PC-9 (cell line): ENCODE measurements at regions of chr1 and their contacts with region 1.

Region 1: GRCh38 chr1:50658459-50659076 is 235.3 kb upstream of the DMRTA2 start:
- DNase-seq: no peak
- H3K4me3 ChIP-seq: no peak overlapping the region
- H3K27ac ChIP-seq: no peak overlapping the region
- H3K4me1 ChIP-seq: no peaks in the 10 kb centered on the region
- H3K27me3 ChIP-seq: no peaks in the 10 kb centered on the region
- CTCF ChIP-seq: no peak

Region 2: GRCh38 chr1:48955774-48956173 is 1702.8 kb before region 1 on chr1:
- CTCF ChIA-PET with region 1: interaction called, 12 read pairs
- POLR2A ChIA-PET with region 1: no interaction called
- intact Hi-C with region 1: no loop called
- DNase-seq: no peak
- H3K4me3 ChIP-seq: no peak overlapping the region
- H3K27ac ChIP-seq: no peak overlapping the region
- H3K4me1 ChIP-seq: no peaks in the 10 kb centered on the region
- H3K27me3 ChIP-seq: no peaks in the 10 kb centered on the region; the same call in 1 of the 2 replicates
- CTCF ChIP-seq: no peak

Region 3: DNA sequence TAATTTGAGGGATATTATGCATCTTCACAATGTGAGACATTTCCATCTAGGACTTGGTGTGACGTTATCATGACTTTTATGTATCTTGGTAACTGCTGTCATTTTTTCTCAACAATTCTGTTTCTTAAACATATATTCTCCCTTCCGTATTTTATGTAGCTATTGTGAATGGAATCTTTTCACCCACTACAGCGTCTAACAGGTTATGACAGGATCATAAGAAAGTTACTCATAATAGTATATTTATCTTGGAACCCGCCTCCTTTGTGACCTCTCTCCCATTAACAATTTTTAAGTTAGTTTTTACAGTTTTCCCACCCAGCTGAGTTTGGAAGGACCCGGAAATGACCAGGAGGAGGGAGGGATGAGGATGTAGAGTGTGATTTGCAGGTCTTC is 228.6 kb before region 1 on chr1:
- CTCF ChIA-PET with region 1: no interaction called
- POLR2A ChIA-PET with region 1: no interaction called
- intact Hi-C with region 1: no loop called
- DNase-seq: no peak
- H3K4me3 ChIP-seq: no peak overlapping the region
- H3K27ac ChIP-seq: no peak overlapping the region
- H3K4me1 ChIP-seq: no peaks in the 10 kb centered on the region
- H3K27me3 ChIP-seq: no peaks in the 10 kb centered on the region
- CTCF ChIP-seq: no peak

Region 4: GRCh38 chr1:50610563-50610962 is 48.0 kb before region 1 on chr1:
- CTCF ChIA-PET with region 1: no interaction called
- POLR2A ChIA-PET with region 1: no interaction called
- intact Hi-C with region 1: no loop called
- DNase-seq: no peak
- H3K4me3 ChIP-seq: no peak overlapping the region
- H3K27ac ChIP-seq: no peak overlapping the region
- H3K4me1 ChIP-seq: no peaks in the 10 kb centered on the region
- H3K27me3 ChIP-seq: no peaks in the 10 kb centered on the region
- CTCF ChIP-seq: no peak

Region 5: DNA sequence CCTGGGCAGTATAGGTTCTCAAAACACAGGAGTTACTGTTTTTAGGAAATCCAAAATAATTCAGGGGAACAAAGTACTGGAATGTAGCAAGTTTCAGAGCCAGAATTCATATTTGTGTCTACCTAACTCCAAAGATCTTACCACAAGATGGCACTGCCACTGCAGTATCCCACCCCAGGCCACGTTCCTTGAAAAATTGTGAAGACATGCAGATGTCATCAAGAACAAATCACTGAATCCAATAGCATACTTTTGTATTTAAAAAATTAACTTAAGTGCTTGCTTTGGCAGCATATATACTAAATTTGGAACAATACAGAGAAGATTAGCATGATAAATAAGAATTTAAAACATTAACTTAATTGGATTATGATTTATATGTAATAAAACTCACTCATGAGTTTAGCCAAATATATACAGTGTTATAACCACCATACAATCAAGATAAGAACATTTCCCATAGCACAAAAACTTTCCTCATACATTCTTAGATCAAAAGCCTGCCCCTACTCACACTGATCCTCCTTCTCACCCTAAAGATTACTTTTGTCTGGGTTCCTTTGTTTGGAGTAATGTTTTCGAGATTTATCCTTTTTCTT is 91.6 kb after region 1 on chr1:
- CTCF ChIA-PET with region 1: interaction called, 11 read pairs
- POLR2A ChIA-PET with region 1: no interaction called
- intact Hi-C with region 1: no loop called
- DNase-seq: peak; percentile 13 to 36
- H3K4me3 ChIP-seq: no peak overlapping the region
- H3K27ac ChIP-seq: no peak overlapping the region
- H3K4me1 ChIP-seq: no peaks in the 10 kb centered on the region
- H3K27me3 ChIP-seq: no peaks in the 10 kb centered on the region
- CTCF ChIP-seq: peak; percentile 63